Calu3 (cell line): ENCODE measurements at regions of chr11 and their contacts with region 1.

Region 1: DNA sequence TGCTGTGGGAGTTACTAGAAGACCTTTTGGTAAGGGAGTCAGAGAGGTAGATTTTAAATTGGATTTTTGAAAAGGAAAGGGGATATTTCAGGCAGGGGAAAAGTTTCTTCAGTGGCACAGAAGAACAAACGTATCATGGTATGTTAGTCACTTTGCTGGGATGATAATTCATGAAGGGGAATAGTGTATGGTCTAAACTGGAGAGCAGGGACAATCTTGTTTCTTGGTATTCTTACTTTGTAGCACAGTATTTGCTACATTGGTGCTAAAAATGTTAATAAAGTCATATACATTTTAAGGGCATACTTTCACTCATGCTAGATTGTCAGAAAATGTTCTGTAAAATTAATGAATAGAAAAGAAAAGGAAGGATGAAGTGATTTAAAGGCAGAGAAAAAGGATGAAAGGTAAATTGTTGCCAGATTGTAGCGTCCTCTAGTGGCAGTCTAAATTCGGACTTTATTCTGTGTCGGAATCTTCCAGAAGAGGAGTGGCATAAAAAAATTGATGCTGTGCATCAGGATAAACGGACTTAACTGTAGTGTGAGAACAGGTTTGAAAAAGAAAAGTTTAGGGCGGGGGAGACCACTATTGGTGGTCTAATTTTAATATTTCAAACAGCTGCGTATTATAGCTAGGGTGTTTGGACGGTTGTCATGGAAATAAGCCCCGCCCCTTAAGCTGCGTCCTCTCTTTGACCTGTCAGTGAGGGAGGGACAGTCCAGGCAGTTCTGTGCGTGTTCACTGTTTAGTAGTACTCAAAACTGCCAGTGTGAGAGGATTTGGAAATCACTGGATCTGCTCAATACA is at the start of gene BCO2:
- DNase-seq: peak; percentile 78
- H3K4me3 Mint-ChIP-seq: peak within 1 kb of the TSS; percentile 62
- H3K27ac Mint-ChIP-seq: peak within 1 kb of the TSS; percentile 89
- H3K4me1 Mint-ChIP-seq: peaks cover 23% of the 10 kb centered on the region
- H3K27me3 Mint-ChIP-seq: no peaks in the 10 kb centered on the region
- CTCF ChIP-seq: peak; percentile 43
- total RNA-seq, gene BCO2: 13.8 and 15.0 TPM in 2 replicates

Region 2: GRCh38 chr11:112113539-112114457 is 61.2 kb before region 1 on chr11:
- CTCF ChIA-PET with region 1: interaction called, 9 read pairs
- intact Hi-C with region 1: loop called (anchors 1 kb)
- DNase-seq: no peak
- H3K4me3 Mint-ChIP-seq: no peak overlapping the region
- H3K27ac Mint-ChIP-seq: no peak overlapping the region
- H3K4me1 Mint-ChIP-seq: no peaks in the 10 kb centered on the region
- H3K27me3 Mint-ChIP-seq: no peaks in the 10 kb centered on the region
- CTCF ChIP-seq: peak; percentile 37

Region 3: GRCh38 chr11:112156956-112157766 is 17.8 kb before region 1 on chr11:
- CTCF ChIA-PET with region 1: interaction called, 10 read pairs
- intact Hi-C with region 1: no loop called
- DNase-seq: peak; percentile 51
- H3K4me3 Mint-ChIP-seq: peak overlapping the region; percentile 60
- H3K27ac Mint-ChIP-seq: peak overlapping the region; percentile 97
- H3K4me1 Mint-ChIP-seq: peaks cover 42% of the 10 kb centered on the region
- H3K27me3 Mint-ChIP-seq: no peaks in the 10 kb centered on the region
- CTCF ChIP-seq: no peak

Region 4: DNA sequence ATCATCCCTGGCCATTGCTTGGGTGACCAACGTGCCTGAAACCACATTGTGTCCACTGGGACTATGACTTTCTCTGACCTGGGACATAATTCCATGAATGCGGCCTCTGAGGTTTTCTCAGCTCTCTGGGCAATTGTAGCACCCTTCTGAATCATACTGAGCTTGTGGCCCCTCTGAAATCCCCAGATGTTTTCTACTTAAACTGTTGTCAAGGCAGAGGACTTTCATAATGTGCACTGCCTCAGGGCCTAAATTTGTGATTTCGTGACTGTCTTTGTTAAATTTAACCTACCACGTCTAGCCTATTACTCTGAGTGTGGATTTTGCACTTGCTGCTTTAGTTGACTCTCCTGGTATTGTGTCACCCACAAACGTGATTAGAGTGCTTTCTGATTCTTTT is 406.8 kb after region 1 on chr11:
- CTCF ChIA-PET with region 1: no interaction called
- intact Hi-C with region 1: no loop called
- DNase-seq: no peak
- H3K4me3 Mint-ChIP-seq: no peak overlapping the region
- H3K27ac Mint-ChIP-seq: no peak overlapping the region
- H3K4me1 Mint-ChIP-seq: no peaks in the 10 kb centered on the region
- H3K27me3 Mint-ChIP-seq: no peaks in the 10 kb centered on the region
- CTCF ChIP-seq: no peak